ENCODE measurements at regions of chr10 and their contacts with region 1.

Region 1: GRCh38 chr10:95755511-95756004 is 405 bp upstream of the ENTPD1 start:
- DNase-seq: peak; percentile 89 to 96 (median 94)
- H3K4me3 ChIP-seq: peak overlapping the region; percentile 61 to 99 (median 77)
- H3K4me3 Mint-ChIP-seq: peak overlapping the region; percentile 84 to 99
- H3K27ac ChIP-seq: peak overlapping the region; percentile 92 to 98
- H3K27ac Mint-ChIP-seq: peak overlapping the region; percentile 98 to 100 (median 99)
- H3K4me1 ChIP-seq: peaks cover 51 to 52% of the 10 kb centered on the region in 2 donors
- H3K4me1 Mint-ChIP-seq: peaks cover 55% of the 10 kb centered on the region
- H3K27me3 ChIP-seq: no peaks in the 10 kb centered on the region
- H3K27me3 Mint-ChIP-seq: peaks cover 0 to 2% (median 2%) of the 10 kb centered on the region in 3 donors
- CTCF ChIP-seq: no peak

Region 2: GRCh38 chr10:95693668-95694534 is 61.7 kb before region 1 on chr10 and contains the start of gene TCTN3:
- intact Hi-C with region 1: loop called (anchors 5 kb)
- DNase-seq: peak; percentile 99 to 100 (median 100)
- H3K4me3 ChIP-seq: peak within 1 kb of the TSS; percentile 88 to 97 (median 92)
- H3K4me3 Mint-ChIP-seq: peak within 1 kb of the TSS; percentile 97 to 99
- H3K27ac ChIP-seq: peak within 1 kb of the TSS; percentile 57 to 88
- H3K27ac Mint-ChIP-seq: peak within 1 kb of the TSS; percentile 86 to 98 (median 95)
- H3K4me1 ChIP-seq: peaks cover 40 to 45% of the 10 kb centered on the region in 2 donors
- H3K4me1 Mint-ChIP-seq: peaks cover 47% of the 10 kb centered on the region
- H3K27me3 ChIP-seq: no peaks in the 10 kb centered on the region
- H3K27me3 Mint-ChIP-seq: peaks cover 0 to 4% (median 0%) of the 10 kb centered on the region in 3 donors
- CTCF ChIP-seq: peak; percentile 99
- polyA plus RNA-seq, gene TCTN3: 8.5 to 23.1 (median 14.4) TPM

Region 3: GRCh38 chr10:95792874-95793285 is 37.3 kb after region 1 on chr10:
- intact Hi-C with region 1: loop called (anchors 5 kb)
- DNase-seq: peak; percentile 50 to 75 (median 62)
- H3K4me3 ChIP-seq: peak overlapping the region in 1 of 3 experiments; percentile 65
- H3K4me3 Mint-ChIP-seq: peak overlapping the region in 1 of 2 donors; percentile 79
- H3K27ac ChIP-seq: peak overlapping the region; percentile 90 to 95
- H3K27ac Mint-ChIP-seq: peak overlapping the region; percentile 93 to 99 (median 98)
- H3K4me1 ChIP-seq: peaks cover 63 to 80% of the 10 kb centered on the region in 2 donors
- H3K4me1 Mint-ChIP-seq: peaks cover 74% of the 10 kb centered on the region
- H3K27me3 ChIP-seq: no peaks in the 10 kb centered on the region
- H3K27me3 Mint-ChIP-seq: peaks cover 0 to 3% (median 0%) of the 10 kb centered on the region in 3 donors
- CTCF ChIP-seq: no peak

Region 4: GRCh38 chr10:95832216-95833041 is 76.9 kb after region 1 on chr10:
- intact Hi-C with region 1: loop called in 1 of 2 experiments (anchors 10 kb)
- DNase-seq: peak in 2 of 3 donors; percentile 30 to 67
- H3K4me3 ChIP-seq: no peak overlapping the region
- H3K4me3 Mint-ChIP-seq: no peak overlapping the region
- H3K27ac ChIP-seq: peak overlapping the region; percentile 10 to 26
- H3K27ac Mint-ChIP-seq: peak overlapping the region; percentile 1 to 86 (median 47)
- H3K4me1 ChIP-seq: peaks cover 11 to 20% of the 10 kb centered on the region in 2 donors
- H3K4me1 Mint-ChIP-seq: peaks cover 43% of the 10 kb centered on the region
- H3K27me3 ChIP-seq: no peaks in the 10 kb centered on the region
- H3K27me3 Mint-ChIP-seq: no peaks in the 10 kb centered on the region
- CTCF ChIP-seq: no peak

Region 5: DNA sequence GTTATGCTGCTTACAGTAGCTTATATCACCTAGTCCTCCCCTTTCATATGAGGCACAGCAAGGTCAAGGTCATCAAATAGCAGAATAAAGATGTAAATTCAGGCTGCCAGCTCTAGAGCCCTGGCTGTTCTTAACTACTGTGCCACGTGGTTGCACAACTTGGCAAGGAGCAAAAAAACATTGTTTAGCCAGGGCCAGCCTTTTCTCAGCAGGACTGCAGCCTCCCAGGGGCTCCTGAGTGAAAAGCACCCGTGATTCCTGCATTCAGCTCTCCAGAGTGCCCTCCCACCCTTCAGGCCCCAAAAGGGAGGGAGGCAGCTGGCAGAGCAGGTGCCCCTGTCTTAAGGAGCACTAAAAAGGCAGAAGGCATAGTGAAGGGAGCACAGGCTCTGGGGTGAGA is 863.1 kb after region 1 on chr10:
- intact Hi-C with region 1: no loop called
- DNase-seq: no peak
- H3K4me3 ChIP-seq: no peak overlapping the region
- H3K4me3 Mint-ChIP-seq: no peak overlapping the region
- H3K27ac ChIP-seq: peak overlapping the region in 1 of 2 donors; percentile 4
- H3K27ac Mint-ChIP-seq: peak overlapping the region in 2 of 7 donors; percentile 23 to 58
- H3K4me1 ChIP-seq: no peaks in the 10 kb centered on the region
- H3K4me1 Mint-ChIP-seq: no peaks in the 10 kb centered on the region
- H3K27me3 ChIP-seq: no peaks in the 10 kb centered on the region
- H3K27me3 Mint-ChIP-seq: peaks cover 0 to 3% (median 0%) of the 10 kb centered on the region in 3 donors
- CTCF ChIP-seq: no peak

Measured in CD14-positive monocyte (primary cell).